Left cardiac atrium (tissue), 4 donors: ENCODE measurements at regions of chr6 and their contacts with region 1.

Region 1: GRCh38 chr6:116096979-116097816 is 3.5 kb upstream of the NT5DC1 start:
- DNase-seq: no peak
- ATAC-seq: no peak

Region 2: GRCh38 chr6:116010790-116011401 is 86.3 kb before region 1 on chr6:
- intact Hi-C with region 1: loop called (anchors 1 to 10 kb)
- DNase-seq: peak; percentile 78
- ATAC-seq: peak; percentile 67 to 87

Region 3: GRCh38 chr6:116060572-116061283 is 36.5 kb before region 1 on chr6 and contains the start of gene FRK:
- intact Hi-C with region 1: no loop called
- DNase-seq: peak; percentile 29
- ATAC-seq: peak; percentile 88 to 95
- total RNA-seq, gene FRK: 4.0 to 4.8 TPM